Activated CD8-positive, alpha-beta T cell treated with anti-CD3 and anti-CD28 coated beads for 36 hours (primary cell): ENCODE measurements at regions of chr6 and their contacts with region 1.

Region 1: DNA sequence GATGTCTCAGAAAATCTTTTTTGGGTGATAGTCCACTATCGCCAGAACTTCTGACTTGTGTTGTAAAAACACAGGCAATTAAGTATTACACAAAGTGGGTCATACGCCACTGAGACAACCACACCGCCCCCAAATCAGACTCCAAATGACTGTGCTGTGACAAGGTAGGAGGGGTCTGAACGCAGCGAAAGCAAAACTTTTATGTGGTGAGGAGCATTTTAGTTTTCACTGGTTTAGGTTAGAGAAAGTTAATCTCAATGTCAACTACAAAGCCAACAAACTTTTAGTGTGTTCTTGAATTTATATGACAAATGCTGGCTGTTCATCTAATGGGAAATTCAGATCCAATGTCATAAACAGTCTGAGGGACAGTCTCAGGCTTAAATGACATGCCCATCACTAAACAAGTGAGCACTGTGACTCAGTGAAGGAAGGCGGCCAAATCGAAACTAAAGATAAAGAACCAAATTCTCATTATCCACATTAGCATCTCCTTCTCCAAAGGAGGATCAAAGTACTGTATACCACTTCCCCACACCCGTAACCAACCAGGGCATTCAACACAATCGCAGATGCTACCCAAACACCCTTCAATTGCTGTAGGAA is 186.7 kb downstream of the GJA10 start:
- DNase-seq: peak; percentile 96
- ATAC-seq: peak; percentile 62
- H3K4me3 Mint-ChIP-seq: peak overlapping the region; percentile 96
- H3K27ac Mint-ChIP-seq: peak overlapping the region; percentile 99
- H3K4me1 Mint-ChIP-seq: peaks cover 72% of the 10 kb centered on the region
- H3K27me3 Mint-ChIP-seq: no peaks in the 10 kb centered on the region
- CTCF ChIP-seq: no peak

Region 2: DNA sequence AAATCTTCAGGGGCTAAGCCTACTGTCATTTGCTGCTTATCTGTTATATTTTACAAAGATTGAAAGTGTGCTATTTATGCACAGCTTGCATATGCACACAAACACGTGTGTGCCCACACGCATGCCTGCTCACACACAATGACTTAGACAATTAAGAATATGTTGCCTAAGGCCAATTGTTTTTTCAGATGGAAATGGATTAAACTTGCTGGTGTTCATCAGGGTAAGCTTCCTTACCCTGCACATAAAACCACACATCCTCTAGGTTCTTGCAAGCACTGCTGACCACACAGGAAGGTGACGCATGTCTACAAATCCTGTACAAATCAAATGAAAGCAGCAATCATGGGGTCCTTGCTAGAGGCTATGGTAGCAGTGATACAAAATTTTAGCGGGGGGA is 128.3 kb before region 1 on chr6:
- CTCF ChIA-PET with region 1: interaction called, 3 read pairs
- POLR2A ChIA-PET with region 1: interaction called, 7 read pairs
- intact Hi-C with region 1: loop called (anchors 5 kb)
- DNase-seq: peak; percentile 85
- ATAC-seq: peak; percentile 84
- H3K4me3 Mint-ChIP-seq: peak overlapping the region; percentile 35
- H3K27ac Mint-ChIP-seq: peak overlapping the region; percentile 89
- H3K4me1 Mint-ChIP-seq: peaks cover 72% of the 10 kb centered on the region
- H3K27me3 Mint-ChIP-seq: no peaks in the 10 kb centered on the region
- CTCF ChIP-seq: no peak

Region 3: DNA sequence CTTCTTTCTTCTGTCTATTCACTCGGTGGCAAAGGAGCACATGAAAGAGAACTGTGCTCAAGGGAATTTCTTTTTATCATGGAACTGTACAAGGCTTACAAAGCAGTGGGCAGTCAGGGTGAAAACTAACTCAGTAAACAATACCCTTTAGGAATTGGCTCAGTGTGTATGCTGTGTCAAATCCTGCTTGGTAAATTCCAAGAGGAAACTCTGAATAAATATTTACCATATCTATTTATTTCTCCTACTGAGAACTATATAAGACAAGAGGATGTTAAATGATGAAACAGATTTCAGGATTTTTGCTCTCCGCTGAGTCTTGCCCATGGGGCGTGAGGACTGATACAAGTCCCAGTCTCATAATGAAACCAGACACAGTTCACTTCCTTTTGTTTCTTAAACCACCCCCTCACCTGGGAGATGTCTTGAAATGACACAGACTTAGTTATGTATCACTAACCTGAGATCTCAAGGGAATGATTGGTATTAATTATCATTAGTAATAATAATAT is 26.8 kb after region 1 on chr6:
- CTCF ChIA-PET with region 1: interaction called, 10 read pairs
- POLR2A ChIA-PET with region 1: interaction called, 13 read pairs
- intact Hi-C with region 1: loop called (anchors 2 kb)
- DNase-seq: peak; percentile 69
- ATAC-seq: peak; percentile 34
- H3K4me3 Mint-ChIP-seq: peak overlapping the region; percentile 19
- H3K27ac Mint-ChIP-seq: peak overlapping the region; percentile 83
- H3K4me1 Mint-ChIP-seq: peaks cover 96% of the 10 kb centered on the region
- H3K27me3 Mint-ChIP-seq: no peaks in the 10 kb centered on the region
- CTCF ChIP-seq: no peak

Region 4: GRCh38 chr6:90197854-90198496 is 117.0 kb after region 1 on chr6:
- CTCF ChIA-PET with region 1: no interaction called
- POLR2A ChIA-PET with region 1: interaction called, 5 read pairs
- intact Hi-C with region 1: loop called (anchors 5 kb)
- DNase-seq: peak; percentile 37
- ATAC-seq: no peak
- H3K4me3 Mint-ChIP-seq: no peak overlapping the region
- H3K27ac Mint-ChIP-seq: peak overlapping the region; percentile 87
- H3K4me1 Mint-ChIP-seq: peaks cover 77% of the 10 kb centered on the region
- H3K27me3 Mint-ChIP-seq: no peaks in the 10 kb centered on the region
- CTCF ChIP-seq: no peak

Region 5: GRCh38 chr6:90285611-90286381 is 204.8 kb after region 1 on chr6:
- CTCF ChIA-PET with region 1: interaction called, 10 read pairs
- POLR2A ChIA-PET with region 1: interaction called, 5 read pairs
- intact Hi-C with region 1: loop called (anchors 1 kb)
- DNase-seq: peak; percentile 80
- ATAC-seq: peak; percentile 40
- H3K4me3 Mint-ChIP-seq: peak overlapping the region; percentile 64
- H3K27ac Mint-ChIP-seq: peak overlapping the region; percentile 94
- H3K4me1 Mint-ChIP-seq: peaks cover 87% of the 10 kb centered on the region
- H3K27me3 Mint-ChIP-seq: no peaks in the 10 kb centered on the region
- CTCF ChIP-seq: no peak